Aorta (tissue), 5 donors: ENCODE measurements at regions of chr12 and their contacts with region 1.

Region 1: DNA sequence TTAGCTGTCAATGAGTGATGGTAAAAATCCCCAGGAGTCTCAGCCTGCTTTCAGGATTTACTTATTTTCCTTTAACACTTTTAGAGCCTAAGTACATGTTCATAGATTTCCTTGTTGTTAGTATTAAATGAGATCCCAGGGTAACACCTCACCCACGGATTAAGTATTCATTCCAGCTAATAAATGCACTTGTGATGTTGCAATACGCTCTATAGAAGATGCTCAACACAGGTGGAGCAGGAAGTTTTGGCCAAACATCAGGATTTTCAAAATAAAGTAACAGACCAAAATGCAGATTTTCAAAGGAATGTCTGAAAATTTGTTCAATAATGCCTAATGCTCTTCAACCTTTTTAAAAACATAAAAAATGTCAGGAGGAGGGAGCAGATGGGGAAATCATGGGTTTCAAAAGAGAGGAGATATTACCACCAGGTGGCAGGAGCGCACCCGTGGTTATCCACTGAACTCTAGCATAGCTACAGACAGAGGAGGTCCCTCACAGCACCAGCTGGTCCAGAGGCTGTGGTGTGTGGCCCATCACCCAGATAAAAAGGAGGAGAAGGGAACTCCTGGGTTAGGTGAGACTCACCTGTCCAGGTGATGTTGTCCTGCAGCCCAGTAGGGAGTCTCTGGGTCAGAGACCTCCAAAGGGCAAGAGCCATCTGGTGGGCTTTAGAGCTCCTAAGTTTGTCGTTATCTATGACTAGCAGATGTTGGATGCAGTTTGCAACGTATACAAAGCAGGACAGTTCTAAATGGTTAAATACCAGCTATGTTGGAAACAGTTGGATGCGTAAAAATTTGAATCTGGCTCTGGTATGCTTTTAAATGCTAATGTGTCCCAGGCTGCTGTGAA is 1158.4 kb upstream of the TMEM132C start:
- DNase-seq: peak in 1 of 2 donors; percentile 61
- ATAC-seq: peak; percentile 67
- H3K4me3 ChIP-seq: no peak overlapping the region
- H3K27ac ChIP-seq: no peak overlapping the region
- H3K4me1 ChIP-seq: no peaks in the 10 kb centered on the region
- H3K27me3 ChIP-seq: no peaks in the 10 kb centered on the region

Region 2: DNA sequence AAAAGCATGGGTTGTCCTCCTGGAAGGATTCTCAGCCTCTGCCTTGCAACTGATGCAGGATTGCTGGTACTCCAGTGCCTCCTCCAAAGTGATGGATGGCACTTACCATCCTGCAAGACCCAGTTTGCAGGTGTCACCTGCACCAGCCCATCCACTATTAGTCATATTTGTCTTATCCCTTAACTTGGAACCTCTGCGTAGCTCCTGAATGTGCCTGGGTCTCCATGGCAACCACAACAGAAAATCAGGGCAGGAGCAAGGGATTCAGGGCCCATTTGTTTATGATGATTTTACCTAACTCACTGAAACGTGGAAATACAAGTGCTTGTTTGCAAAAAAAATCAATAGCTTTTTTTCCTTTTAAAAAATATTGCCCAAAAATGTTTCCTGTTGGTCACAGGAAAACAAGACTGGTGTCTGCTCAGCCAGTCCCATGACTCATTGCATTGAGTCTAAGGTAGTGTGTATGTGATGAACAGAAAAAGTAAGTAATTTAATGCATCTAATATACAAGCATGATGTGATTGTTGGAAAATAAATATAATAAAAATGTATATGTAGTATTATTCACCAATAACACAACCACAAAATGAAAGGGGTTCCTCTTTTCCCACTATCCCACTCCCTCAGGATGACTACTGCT is 38.0 kb before region 1 on chr12:
- intact Hi-C with region 1: no loop called
- DNase-seq: no peak
- ATAC-seq: no peak
- H3K4me3 ChIP-seq: no peak overlapping the region
- H3K27ac ChIP-seq: no peak overlapping the region
- H3K4me1 ChIP-seq: no peaks in the 10 kb centered on the region
- H3K27me3 ChIP-seq: no peaks in the 10 kb centered on the region

Region 3: DNA sequence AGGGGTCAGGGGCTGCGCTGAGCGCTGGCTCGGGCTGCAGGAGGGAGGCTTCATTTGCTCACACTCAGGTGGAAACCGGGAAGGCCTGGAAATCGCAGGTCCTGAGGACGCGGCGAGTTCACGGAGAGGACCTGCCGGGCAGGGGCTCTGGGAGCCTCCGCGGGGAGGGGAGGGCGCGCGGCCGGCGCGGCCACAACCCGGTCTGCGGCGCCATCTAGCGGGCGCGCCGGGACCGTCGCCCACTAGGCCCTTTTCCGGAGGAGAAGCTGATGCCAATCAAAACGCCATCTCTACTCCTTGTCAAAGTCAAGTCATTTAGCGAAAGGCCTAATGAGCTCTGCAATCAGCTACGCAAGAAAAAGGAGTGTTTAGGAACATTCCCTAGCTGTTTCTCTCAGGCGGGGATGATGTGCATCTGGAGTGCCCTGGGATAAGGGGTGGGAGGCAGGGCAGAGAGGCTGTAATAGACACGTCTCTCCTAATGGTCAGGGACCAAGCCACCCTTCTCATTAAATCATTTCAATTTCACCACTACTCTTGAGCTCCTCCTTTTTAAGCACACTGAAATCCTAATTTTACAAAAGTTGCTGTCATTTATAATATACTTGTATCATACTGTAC is 272.6 kb after region 1 on chr12:
- intact Hi-C with region 1: loop called in 1 of 2 experiments (anchors 2 kb)
- DNase-seq: peak in 1 of 2 donors; percentile 75
- ATAC-seq: peak; percentile 69
- H3K4me3 ChIP-seq: no peak overlapping the region
- H3K27ac ChIP-seq: no peak overlapping the region
- H3K4me1 ChIP-seq: no peaks in the 10 kb centered on the region
- H3K27me3 ChIP-seq: no peaks in the 10 kb centered on the region